Caco-2 (cell line): ENCODE measurements at regions of chr12 and their contacts with region 1.

Region 1: DNA sequence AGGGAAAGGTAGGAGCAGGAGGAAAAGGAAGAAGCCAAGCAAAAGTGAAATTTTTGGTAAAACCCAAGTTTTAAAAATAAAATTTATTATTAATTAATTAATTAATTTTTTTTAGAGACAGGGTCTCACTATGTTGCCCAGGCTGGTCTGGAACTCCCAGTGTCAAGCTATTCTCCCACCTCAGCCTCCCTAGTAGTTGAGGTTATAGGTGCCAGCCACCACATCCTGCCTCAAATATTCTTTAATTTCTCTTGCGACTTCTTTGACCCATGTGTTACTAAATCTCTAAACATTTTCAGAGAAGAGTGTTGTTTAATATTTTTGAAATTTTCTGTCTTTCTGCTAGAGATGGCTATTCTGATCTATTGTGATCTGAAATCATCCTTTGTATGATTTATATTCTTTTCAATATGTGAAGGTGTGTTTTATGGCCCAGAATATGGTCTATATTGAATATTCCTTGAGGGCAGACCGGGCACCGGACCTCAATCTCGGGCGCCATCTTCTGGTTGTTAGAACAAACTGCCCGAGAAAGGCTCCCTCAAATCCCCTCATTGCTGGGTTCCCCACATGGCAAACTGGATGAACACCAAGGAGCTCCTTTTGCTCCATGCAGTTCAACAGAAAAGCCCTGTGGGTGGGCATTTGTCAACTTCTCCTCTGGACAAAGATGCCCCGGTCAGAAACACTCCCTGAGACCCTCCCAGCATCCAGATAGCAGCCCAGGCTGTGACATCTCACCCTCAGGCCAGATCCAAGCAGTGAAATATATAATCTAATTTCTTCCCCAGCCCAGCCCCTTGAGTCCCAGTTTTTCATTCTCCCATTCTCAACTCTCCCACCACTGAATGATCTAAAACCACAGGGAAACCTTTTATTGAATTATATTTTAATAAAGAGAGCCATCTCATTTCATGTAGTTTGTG is 110.5 kb downstream of the ASCL4 start:
- DNase-seq: peak; percentile 68 to 71
- H3K4me3 ChIP-seq: no peak overlapping the region
- H3K4me3 Mint-ChIP-seq: no peak overlapping the region
- H3K27ac Mint-ChIP-seq: no peak overlapping the region
- H3K4me1 ChIP-seq: no peaks in the 10 kb centered on the region
- H3K4me1 Mint-ChIP-seq: no peaks in the 10 kb centered on the region
- H3K27me3 ChIP-seq: no peaks in the 10 kb centered on the region; the same call in 1 of the 2 replicates
- H3K27me3 Mint-ChIP-seq: peaks cover 4% of the 10 kb centered on the region
- CTCF ChIP-seq: peak; percentile 79 to 82

Region 2: DNA sequence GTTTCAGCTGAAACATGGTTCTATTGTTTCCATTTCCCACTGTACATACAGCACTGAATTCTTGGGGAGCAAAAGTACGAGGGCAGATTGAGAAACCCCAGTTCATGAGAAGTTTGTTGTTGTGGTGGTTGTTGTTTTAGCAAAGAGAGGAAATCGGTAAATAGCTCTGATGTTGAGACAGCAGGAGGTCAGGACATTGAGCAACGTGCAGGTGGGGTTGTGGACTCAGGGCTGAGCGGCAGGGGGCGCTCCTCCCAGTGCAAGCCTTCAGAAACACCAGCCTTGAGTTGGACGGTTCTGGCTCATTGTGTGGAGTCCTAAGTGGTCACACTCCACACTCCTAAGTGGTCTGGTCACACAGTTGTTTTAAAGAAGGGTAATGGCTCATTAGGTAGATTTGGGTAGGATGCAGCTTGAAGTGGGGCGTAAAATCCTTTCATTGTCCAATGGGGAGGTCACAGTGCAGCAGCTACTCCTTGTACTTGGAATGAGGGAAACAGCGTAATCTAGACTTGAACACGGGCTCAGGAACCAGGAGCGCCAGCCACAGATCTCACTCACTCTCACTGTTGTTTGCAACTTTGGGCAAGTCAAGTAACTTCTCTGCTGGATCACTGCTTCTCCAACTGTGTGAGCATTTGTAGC is 213.9 kb before region 1 on chr12:
- CTCF ChIA-PET with region 1: interaction called, 5 read pairs
- POLR2A ChIA-PET with region 1: no interaction called
- intact Hi-C with region 1: loop called (anchors 1 kb)
- DNase-seq: peak in 1 of 2 experiments; percentile 6
- H3K4me3 ChIP-seq: no peak overlapping the region
- H3K4me3 Mint-ChIP-seq: no peak overlapping the region
- H3K27ac Mint-ChIP-seq: no peak overlapping the region
- H3K4me1 ChIP-seq: no peaks in the 10 kb centered on the region
- H3K4me1 Mint-ChIP-seq: no peaks in the 10 kb centered on the region
- H3K27me3 ChIP-seq: no peaks in the 10 kb centered on the region
- H3K27me3 Mint-ChIP-seq: peaks cover 4% of the 10 kb centered on the region
- CTCF ChIP-seq: peak in 1 of 2 experiments; percentile 32

Region 3: DNA sequence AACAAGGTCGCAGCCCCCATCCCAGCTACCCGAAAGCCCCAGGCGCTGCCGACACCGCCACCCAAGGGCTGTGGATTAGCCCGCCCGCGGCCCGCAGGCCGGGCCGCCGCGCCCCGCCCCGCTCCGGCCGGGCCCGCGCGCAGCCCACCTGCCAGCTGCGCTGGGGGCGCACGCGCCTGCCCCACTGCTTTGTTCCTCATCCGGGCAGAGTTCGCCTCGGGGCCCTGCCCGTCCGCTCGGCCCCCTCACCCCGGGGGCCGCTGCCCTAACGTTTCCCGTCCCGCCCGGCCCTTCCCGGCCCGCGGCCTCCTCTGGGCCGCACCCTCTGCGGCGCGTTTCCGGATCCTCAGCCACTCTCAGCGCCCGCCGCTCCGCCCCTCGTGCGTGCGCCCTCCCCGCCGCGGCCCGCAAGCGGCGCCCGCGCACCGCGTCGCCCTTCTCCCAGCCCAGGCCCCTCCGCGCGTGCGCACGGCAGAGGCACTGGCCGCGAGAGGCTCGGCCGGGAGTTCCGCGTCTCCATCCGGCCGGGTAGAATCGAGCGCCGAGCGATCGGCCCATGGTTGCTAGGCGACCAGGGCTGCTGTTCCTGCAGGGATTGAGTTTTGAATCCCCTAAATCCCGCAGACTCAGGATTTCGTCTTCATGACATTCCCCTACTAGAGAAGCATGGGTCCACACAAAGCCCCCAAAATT is 124.1 kb before region 1 on chr12 and contains the start of gene PRDM4:
- CTCF ChIA-PET with region 1: interaction called, 3 read pairs
- POLR2A ChIA-PET with region 1: no interaction called
- intact Hi-C with region 1: loop called (anchors 1 kb)
- DNase-seq: peak; percentile 91 to 96
- H3K4me3 ChIP-seq: peak within 1 kb of the TSS; percentile 85
- H3K4me3 Mint-ChIP-seq: peak within 1 kb of the TSS; percentile 83
- H3K27ac Mint-ChIP-seq: peak within 1 kb of the TSS; percentile 84
- H3K4me1 ChIP-seq: no peaks in the 10 kb centered on the region
- H3K4me1 Mint-ChIP-seq: peaks cover 6% of the 10 kb centered on the region
- H3K27me3 ChIP-seq: no peaks in the 10 kb centered on the region
- H3K27me3 Mint-ChIP-seq: no peaks in the 10 kb centered on the region
- CTCF ChIP-seq: peak in 1 of 2 experiments; percentile 12
- total RNA-seq, gene PRDM4: 19.1 and 19.4 TPM in 2 replicates

Region 4: GRCh38 chr12:108129017-108129812 is 244.2 kb after region 1 on chr12 and contains the start of gene WSCD2:
- CTCF ChIA-PET with region 1: interaction called, 11 read pairs
- POLR2A ChIA-PET with region 1: no interaction called
- intact Hi-C with region 1: no loop called
- DNase-seq: peak; percentile 78 to 82
- H3K4me3 ChIP-seq: peak within 1 kb of the TSS; percentile 38
- H3K4me3 Mint-ChIP-seq: peak within 1 kb of the TSS; percentile 71
- H3K27ac Mint-ChIP-seq: no peak within 1 kb of the TSS
- H3K4me1 ChIP-seq: no peaks in the 10 kb centered on the region
- H3K4me1 Mint-ChIP-seq: no peaks in the 10 kb centered on the region
- H3K27me3 ChIP-seq: no peaks in the 10 kb centered on the region; the same call in 1 of the 2 replicates
- H3K27me3 Mint-ChIP-seq: peaks cover 21% of the 10 kb centered on the region
- CTCF ChIP-seq: peak; percentile 49 to 65
- total RNA-seq, gene WSCD2: not detected in 2 replicates